ENCODE measurements at regions of chr1 and their contacts with region 1.

Region 1: DNA sequence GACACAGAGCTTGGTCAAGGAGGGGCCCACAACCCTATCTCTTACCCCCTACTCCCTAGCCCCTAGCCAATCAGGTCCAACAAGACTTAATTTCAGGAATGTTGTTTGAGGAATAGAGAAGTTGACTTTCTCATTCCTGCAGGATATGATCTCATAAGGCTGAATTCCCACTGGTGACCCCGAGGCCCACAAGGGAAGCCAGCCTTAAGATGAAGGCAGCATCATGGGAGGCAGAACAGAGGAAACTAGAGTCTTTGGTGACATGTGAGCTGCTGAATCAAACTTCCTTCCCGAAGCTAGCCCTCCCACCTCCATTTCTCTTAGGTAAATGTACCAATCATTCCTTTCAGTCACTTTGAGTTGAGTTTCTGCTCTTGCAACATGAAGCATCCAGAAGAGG is 9.1 kb upstream of the PDIK1L start:
- DNase-seq: no peak
- ATAC-seq: no peak

Region 2: GRCh38 chr1:26127235-26128163 is 25.0 kb after region 1 on chr1:
- intact Hi-C with region 1: no loop called
- DNase-seq: no peak
- ATAC-seq: peak; percentile 26

Region 3: DNA sequence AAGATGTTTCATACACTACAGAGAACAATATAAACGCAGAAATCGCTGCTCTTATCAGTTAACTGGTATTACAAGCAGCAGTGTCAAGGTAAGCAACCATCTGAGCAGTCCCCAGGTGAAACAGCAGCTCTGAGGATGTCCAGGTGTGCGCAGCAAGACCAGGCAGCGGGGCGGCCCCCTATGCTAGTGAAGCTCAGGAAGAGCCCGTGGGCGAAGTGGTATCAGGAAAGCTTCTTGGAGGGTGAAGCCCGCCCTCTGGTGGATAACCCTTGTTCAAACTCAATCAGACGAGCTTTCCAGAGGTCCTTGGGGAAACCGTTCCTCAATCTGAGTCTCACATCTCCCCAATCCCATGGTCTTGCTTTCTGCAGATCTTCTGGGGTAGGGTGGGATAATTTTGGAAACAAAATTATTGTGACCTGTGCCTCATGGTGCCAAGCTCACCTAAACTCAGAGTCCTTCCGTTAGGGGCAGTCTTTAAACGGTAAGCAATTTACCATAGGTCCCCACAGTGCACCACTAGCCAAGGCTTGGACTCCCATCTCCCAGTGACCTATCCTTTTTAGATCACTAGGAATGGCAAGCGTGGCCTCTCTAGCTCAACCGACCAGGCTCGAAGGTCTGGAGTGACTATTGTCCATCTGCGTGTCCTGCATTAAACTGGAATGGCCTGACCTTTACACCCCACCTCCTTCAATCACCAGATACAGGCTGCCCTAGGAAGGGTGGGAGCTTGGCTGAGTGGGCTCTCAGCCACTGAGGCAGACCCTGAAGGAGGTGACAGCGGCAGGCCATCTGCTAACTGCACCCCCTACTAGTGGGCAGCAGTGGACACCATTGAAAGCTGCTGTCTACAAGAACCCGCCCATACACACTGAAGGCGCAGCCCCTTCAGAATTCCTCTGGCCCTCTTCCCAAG is 42.8 kb after region 1 on chr1:
- intact Hi-C with region 1: loop called (anchors 1 kb)
- DNase-seq: peak; percentile 80
- ATAC-seq: peak; percentile 85

Region 4: GRCh38 chr1:26164036-26164860 is 61.7 kb after region 1 on chr1:
- intact Hi-C with region 1: loop called (anchors 2 kb)
- DNase-seq: no peak
- ATAC-seq: peak; percentile 27

Region 5: DNA sequence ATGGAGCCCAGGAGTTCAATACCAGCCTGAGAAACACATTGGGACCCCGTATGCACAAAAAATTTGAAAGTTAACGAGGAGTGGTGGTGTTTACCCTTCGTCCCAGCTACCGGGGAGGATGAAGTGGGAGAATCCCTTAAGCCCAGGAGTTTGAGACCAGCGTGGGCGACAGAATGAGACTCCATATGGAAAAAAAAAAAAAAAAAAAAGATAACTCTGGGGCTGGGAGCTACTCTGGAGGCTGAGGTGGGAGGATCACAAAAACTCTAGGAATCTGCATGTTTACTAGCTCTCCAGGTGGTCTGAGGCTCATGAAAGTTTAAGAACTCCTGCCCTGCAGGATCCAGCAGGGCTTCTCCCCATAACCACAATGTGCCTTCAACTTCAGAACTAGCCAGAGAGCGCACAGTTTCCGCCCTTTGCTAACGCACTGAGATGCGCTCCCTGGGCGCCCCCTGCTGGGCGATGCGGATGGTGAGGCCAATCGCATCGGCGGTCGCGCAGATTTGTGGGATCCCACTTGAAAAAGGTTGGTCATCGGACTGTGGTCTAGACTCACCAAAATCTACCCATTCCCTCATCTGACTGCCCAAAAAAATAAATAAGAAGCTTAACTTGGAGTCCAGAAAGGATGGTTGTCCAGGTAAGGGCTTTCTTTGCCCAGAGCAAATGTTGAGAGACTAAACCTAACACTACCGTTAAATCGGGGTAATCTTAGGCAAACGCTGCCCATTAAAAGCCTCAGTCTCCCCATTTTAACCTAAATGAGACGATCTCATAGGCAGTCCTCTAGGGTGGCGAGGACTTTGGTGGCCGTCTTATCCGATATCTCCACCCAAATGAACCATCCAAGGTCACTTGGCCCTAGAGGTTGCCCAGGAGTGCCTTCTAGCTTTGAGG is 261.3 kb after region 1 on chr1:
- intact Hi-C with region 1: loop called (anchors 5 kb)
- DNase-seq: peak; percentile 92
- ATAC-seq: peak; percentile 68